Astrocyte of the cerebellum (primary cell): ENCODE measurements at regions of chr10 and their contacts with region 1.

Region 1: DNA sequence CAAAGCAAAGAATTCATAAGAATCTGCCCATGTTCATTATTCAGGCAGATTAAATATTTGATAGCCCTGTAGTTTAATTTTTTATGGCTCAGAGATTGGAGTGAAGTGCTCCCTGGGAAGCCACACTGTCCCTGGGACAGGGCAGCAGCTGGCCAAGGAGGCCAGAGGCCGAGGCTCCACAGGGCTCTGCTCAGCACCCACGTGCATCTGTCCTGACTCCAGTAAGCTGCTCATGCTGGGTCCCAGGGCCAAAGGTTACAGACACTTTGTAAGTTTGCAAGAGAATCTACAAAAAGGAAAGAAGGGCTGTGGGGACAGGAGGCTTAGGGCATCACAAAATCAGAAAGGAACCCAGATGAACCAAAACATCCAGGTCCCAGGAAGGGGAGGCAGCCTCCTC is 155.5 kb downstream of the KCNMA1 start:
- DNase-seq: no peak
- H3K4me3 ChIP-seq: no peak overlapping the region
- CTCF ChIP-seq: no peak

Region 2: DNA sequence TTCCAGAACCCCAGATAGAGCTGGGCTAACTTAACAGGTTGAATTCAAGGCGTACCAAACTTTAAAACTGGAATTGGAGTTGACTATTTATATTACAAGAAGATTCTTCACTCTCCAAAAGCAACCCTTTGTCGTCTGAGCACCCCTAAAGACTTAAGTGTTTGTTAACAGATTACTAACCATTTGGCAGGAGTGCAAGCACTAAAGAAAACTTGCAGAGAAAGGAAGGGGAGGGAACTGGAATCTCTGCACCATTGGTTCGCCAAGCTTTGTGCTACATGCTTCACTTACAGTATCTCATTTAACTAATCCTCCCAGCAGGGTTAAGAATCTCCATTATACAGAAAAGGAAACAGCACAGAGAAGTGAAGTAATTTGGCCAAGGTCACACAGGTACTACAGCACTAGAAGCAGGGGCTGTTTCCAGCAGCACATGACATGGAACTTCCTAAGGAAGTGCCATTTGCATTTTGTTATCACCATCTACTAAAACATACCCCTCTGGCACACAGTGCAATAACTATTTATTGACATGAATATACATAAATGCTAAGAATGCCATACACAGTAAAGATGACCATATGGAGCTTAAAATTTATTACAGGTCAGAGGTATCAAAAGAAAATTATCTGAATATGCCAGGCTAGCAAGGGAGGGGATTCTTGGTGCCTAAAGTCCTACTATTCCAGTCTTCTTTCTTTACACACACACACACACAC is 45.7 kb before region 1 on chr10:
- in situ Hi-C with region 1: loop called (anchors 5 kb)
- DNase-seq: no peak
- H3K4me3 ChIP-seq: no peak overlapping the region
- CTCF ChIP-seq: no peak

Region 3: DNA sequence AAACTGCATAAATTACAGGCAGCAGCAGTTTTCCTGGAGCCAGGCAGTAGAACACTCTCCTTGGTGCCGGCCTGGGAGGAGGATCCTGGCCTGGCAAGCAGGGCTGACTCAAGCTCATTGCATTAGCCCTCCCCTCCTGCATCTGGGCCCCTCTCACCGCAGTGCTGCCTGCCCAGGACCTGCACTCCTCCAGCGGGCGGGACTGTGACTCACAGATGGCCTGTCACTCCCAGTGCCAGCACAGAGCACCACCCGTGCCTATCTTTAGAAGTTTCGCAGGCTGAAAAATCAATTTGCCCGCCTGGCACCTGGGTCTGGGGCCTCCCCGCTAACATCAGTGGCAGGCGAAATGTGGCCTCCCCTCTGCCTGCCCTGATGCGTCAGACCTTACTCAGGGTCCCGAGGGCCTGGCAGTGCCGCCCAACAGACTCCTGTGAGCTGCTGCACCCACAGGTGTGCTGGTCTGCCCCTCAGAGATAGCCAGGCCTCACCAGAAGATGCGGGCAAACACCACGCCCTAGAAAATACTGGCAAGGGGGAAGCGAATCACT is 31.8 kb after region 1 on chr10:
- in situ Hi-C with region 1: no loop called
- DNase-seq: peak; percentile 65
- H3K4me3 ChIP-seq: no peak overlapping the region
- CTCF ChIP-seq: no peak

Region 4: GRCh38 chr10:77548151-77548550 is 66.1 kb after region 1 on chr10:
- in situ Hi-C with region 1: no loop called
- DNase-seq: no peak
- H3K4me3 ChIP-seq: no peak overlapping the region
- CTCF ChIP-seq: no peak

Region 5: GRCh38 chr10:77643795-77644468 is 161.9 kb after region 1 on chr10:
- in situ Hi-C with region 1: no loop called
- DNase-seq: peak; percentile 49
- H3K4me3 ChIP-seq: no peak overlapping the region
- CTCF ChIP-seq: peak; percentile 66